ENCODE measurements at regions of chr5 and their contacts with region 1.

Region 1: DNA sequence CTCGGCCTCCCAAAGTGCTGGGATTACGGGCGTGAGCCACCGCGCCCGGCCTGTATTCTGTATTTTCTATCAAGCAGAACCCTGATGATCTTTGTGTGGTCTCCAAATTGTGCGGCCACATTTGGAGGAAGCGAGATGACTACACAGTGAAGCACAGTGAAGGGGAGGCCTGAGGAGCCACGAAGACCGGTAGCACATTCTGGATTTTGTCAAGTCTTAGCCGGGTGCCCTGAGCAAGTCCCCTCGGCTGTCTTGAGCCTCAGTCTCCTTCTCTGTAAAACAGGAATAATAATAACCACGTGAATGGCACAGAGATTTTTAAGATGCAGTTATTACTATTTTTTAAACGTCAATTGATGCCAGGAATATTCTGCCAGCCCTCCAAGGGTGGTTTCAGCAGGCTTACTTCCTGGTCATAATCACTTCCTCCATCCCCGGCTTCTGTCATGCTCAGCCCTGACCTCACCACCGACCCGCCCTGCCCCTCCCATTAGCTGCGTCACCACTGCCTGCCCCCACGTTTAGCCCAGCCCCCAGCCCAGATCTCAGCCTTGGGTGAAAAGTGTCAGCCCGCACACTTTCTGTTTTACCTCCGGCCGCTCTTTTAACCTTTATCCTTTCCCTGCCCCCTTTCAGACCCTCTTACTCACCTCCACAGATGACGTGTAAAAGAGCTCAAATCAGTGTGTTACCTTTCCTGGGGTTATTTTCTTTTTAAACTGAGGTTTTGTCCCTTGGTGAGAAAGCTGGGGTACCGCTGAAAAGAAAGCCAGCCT is 27.0 kb upstream of the ERGIC1 start:
- DNase-seq: peak; percentile 74
- H3K4me3 Mint-ChIP-seq: peak overlapping the region; percentile 43
- H3K27ac Mint-ChIP-seq: peak overlapping the region; percentile 91
- H3K4me1 Mint-ChIP-seq: peaks cover 15% of the 10 kb centered on the region
- H3K27me3 Mint-ChIP-seq: no peaks in the 10 kb centered on the region

Region 2: GRCh38 chr5:172078726-172079345 is 728.2 kb before region 1 on chr5:
- intact Hi-C with region 1: no loop called
- DNase-seq: no peak
- H3K4me3 Mint-ChIP-seq: peak overlapping the region; percentile 58
- H3K27ac Mint-ChIP-seq: peak overlapping the region; percentile 71
- H3K4me1 Mint-ChIP-seq: peaks cover 29% of the 10 kb centered on the region
- H3K27me3 Mint-ChIP-seq: no peaks in the 10 kb centered on the region

Region 3: DNA sequence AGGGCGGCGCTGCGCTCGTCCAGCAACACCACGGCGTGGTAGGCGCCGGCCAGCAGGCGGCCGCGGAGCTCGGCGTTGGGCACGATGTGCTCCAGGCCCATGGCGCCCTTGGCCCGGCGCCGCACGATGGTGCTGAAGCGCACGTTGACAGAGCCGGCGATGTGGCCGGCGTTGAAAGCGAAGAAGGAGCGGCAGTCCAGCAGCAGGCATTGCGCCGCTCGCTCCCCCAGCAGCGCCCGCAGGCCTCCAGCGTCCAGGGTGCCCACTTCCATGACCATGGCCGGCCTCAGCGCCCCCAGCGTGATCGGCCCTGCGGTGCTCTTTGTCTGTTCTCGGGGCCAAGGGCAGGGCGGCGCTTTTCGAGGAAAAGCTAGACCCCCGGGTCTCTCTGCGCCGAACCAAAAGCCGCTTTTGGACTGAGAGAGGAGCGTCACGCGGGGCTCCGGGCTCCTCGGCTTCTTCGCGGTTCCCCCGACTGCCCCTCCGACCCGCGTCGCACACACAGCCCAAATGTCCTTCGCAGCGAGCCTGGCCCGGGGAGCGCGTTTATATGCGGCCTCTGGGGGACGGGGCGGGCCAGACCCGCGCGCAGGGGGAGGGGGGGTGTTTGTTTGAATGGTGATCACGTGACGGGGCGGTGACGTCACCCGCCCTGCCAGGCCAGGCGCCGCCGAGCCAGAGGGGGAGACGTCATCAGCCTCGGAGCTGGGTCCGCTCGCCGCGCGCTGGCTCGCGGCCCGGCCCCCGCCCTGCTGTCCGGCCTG is 36.2 kb before region 1 on chr5 and contains the start of gene DUSP1:
- intact Hi-C with region 1: loop called (anchors 1 kb)
- DNase-seq: peak; percentile 93
- H3K4me3 Mint-ChIP-seq: peak within 1 kb of the TSS; percentile 88
- H3K27ac Mint-ChIP-seq: peak within 1 kb of the TSS; percentile 98
- H3K4me1 Mint-ChIP-seq: peaks cover 61% of the 10 kb centered on the region
- H3K27me3 Mint-ChIP-seq: no peaks in the 10 kb centered on the region
- total RNA-seq, gene DUSP1: 11.9 and 12.5 TPM in 2 replicates

Region 4: DNA sequence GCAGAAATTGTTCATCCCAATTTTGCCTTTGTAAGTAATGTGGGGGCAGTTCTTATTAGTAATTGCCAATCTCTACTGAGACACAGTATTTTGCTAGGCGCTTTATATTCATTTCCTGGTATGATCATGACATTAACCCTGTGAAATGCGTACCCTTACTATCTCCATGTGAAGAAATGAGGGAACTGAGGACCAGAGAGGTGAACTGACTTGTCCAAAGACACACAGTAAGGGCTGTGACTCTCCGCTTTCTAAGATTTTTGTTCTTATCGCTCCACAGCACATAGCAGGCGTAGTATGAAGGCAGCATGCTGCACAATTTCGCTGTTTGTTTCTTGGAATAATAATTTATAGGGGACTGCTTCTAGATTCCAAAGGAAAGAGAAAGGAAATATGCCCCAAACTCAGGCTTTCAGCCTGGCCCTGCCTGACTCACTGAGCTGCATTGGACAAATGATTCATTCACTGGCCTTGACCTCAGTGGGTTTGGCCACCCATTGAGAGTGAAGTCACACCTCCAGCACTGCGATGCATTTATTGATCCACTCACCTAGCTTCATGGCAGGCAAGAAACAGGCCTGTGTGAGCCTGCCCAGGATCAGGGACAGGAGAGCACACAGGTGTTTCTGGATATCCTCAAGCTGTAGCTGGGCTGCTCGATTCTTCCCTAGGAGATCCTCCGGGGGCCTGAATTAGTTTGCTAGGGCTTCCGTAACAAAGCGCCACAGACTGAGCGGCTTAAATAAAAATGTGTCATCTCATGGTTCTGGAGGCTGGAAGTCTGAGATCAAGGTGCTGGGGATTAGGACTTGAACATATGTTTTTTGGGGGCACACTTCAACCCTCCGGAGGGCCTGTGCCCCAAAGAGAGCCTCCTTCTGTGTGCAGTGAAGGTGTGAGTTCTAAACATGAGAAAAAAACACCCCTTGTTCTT is 28.9 kb before region 1 on chr5:
- intact Hi-C with region 1: loop called (anchors 1 kb)
- DNase-seq: no peak
- H3K4me3 Mint-ChIP-seq: peak overlapping the region; percentile 55
- H3K27ac Mint-ChIP-seq: peak overlapping the region; percentile 94
- H3K4me1 Mint-ChIP-seq: peaks cover 45% of the 10 kb centered on the region
- H3K27me3 Mint-ChIP-seq: no peaks in the 10 kb centered on the region

Region 5: DNA sequence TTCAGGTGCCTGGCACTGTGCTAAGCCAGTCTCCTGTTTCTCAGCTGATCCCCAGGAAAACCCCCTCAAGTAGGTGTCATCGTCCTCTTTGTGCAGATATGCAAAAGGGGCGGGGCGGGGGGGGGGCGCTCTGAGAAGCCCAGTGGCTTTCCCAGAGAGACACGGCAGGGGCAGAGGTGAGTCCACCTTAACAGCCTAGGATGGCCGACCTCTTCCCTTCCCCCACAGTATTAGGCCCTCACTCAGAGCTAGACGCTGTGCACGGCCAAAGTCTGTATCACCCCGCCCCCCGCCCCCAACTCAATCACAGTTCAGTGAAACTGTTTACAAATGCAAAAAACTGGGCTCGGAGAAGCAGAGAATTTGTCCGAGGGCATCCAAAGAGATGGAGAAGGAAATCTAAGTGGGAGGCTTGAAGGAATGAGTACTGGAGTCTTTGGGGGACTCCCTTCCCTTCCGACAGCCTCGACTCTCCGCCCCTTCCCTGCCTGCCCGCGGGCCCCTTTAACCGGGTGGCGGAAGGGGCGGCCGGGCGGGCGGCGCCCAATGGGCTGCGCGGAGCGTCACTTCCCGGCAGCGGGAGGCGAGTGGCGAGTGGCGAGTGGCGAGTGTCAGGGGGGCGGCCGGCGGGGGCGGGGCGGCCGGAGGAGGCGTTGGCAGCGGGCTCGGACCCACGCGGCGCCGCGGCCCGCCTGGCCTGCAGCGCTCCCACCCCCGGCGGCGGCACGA is 26.8 kb after region 1 on chr5 and contains the start of gene ERGIC1:
- intact Hi-C with region 1: loop called (anchors 1 kb)
- DNase-seq: peak; percentile 79
- H3K4me3 Mint-ChIP-seq: peak within 1 kb of the TSS; percentile 88
- H3K27ac Mint-ChIP-seq: peak within 1 kb of the TSS; percentile 85
- H3K4me1 Mint-ChIP-seq: peaks cover 19% of the 10 kb centered on the region
- H3K27me3 Mint-ChIP-seq: no peaks in the 10 kb centered on the region
- total RNA-seq, gene ERGIC1: 47.4 and 47.9 TPM in 2 replicates

Region 6: DNA sequence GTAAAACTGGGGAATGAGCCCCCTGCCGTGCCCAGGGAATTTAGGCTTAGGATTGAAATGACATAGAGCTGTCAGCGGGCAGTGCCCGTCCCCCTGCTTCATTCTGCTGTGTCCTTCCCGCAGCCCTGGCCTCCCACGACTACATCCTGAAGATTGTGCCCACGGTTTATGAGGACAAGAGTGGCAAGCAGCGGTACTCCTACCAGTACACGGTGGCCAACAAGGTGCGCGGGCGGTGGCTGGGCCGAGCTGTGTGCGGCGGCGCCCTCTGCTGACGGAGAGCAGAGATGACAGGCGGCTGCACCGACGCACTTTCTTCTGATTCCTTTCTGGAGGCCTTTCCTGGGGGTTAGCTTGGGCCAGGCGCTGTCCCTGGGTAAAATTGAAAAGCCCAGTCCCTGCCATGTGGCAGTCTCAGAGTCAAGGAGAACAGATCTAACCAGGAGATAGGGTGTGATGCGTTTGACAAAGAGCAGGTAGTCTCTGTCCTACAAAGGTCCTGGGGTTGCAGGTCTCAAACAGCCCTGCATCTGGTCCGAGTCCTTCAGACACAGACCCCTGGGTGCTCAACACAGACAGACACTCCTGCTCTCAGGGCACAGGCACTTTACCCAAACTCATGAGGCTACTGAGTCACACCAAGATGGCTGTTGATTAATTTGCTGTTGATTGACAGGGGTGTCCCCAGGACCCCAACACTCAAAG is 125.4 kb after region 1 on chr5:
- intact Hi-C with region 1: loop called (anchors 1 kb)
- DNase-seq: peak; percentile 50
- H3K4me3 Mint-ChIP-seq: no peak overlapping the region
- H3K27ac Mint-ChIP-seq: peak overlapping the region; percentile 7
- H3K4me1 Mint-ChIP-seq: peaks cover 8% of the 10 kb centered on the region
- H3K27me3 Mint-ChIP-seq: no peaks in the 10 kb centered on the region

Region 7: GRCh38 chr5:173396311-173396993 is 589.4 kb after region 1 on chr5:
- intact Hi-C with region 1: no loop called
- DNase-seq: no peak
- H3K4me3 Mint-ChIP-seq: no peak overlapping the region
- H3K27ac Mint-ChIP-seq: no peak overlapping the region
- H3K4me1 Mint-ChIP-seq: no peaks in the 10 kb centered on the region
- H3K27me3 Mint-ChIP-seq: peaks cover 3% of the 10 kb centered on the region